A673 (cell line): ENCODE measurements at regions of chr7 and their contacts with region 1.

Region 1: DNA sequence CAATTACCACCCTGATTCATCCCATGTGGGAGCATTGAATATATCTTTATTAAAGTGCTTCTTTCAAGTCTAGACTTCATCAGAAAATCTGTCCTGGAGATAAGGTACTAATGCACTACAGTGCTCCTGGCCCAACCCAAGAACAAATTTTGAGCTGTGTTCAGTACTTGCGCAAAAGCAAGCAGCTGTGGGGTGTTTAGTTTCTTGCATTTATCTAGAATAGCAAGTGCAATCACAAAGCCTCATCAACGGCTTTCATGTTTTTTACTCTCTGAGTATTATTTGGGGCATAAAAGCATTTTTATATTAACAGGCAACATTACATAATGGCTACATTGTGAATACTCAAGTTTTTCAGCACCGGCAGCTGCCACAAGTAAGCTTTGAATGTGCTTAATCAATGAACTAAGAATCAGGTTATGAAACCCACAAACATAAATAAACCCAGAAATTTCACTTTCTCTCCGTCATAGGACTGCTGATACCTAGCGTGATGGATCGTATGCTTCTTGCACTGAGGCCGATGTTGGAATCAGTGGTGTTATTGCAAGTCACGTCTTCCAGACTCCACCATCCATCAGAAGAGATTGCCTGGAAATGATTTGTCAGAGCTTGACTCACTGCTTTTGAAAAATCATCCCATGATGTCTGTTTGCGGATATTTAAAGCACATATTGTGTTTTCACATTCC is 113.1 kb downstream of the CTTNBP2 start:
- DNase-seq: no peak
- H3K4me3 ChIP-seq: no peak overlapping the region
- H3K27ac ChIP-seq: no peak overlapping the region
- H3K4me1 ChIP-seq: no peaks in the 10 kb centered on the region
- H3K27me3 ChIP-seq: no peaks in the 10 kb centered on the region
- CTCF ChIP-seq: no peak

Region 2: DNA sequence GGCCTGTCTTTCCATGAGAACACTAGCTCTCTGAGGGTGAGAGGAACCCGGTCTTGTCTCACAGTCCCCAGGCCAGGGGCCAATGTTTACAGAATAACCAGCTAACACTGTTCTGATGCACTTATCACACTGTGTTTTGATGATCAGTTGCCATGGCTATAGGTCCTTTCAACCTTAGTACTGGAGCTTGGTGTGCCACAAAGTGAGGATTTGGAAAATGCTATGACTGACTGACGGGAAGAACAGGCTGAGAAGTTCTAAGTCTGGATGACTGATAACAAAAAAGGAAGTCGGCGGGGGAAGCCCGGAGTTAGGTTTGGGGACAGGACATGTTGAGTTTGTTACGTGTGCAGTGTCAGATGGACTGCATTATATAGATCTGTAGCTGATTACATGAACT is 28.6 kb before region 1 on chr7:
- CTCF ChIA-PET with region 1: no interaction called
- POLR2A ChIA-PET with region 1: interaction called, 11 read pairs
- intact Hi-C with region 1: no loop called
- DNase-seq: no peak
- H3K4me3 ChIP-seq: no peak overlapping the region
- H3K27ac ChIP-seq: no peak overlapping the region
- H3K4me1 ChIP-seq: peaks cover 28% of the 10 kb centered on the region
- H3K27me3 ChIP-seq: no peaks in the 10 kb centered on the region
- CTCF ChIP-seq: no peak

Region 3: GRCh38 chr7:117827862-117828261 is 67.8 kb after region 1 on chr7:
- CTCF ChIA-PET with region 1: no interaction called
- POLR2A ChIA-PET with region 1: no interaction called
- intact Hi-C with region 1: no loop called
- DNase-seq: peak; percentile 88
- H3K4me3 ChIP-seq: no peak overlapping the region
- H3K27ac ChIP-seq: peak overlapping the region; percentile 82
- H3K4me1 ChIP-seq: peaks cover 42% of the 10 kb centered on the region
- H3K27me3 ChIP-seq: no peaks in the 10 kb centered on the region
- CTCF ChIP-seq: no peak